ENCODE measurements at regions of chr6 and their contacts with region 1.

Region 1: GRCh38 chr6:129031051-129031599 is 148.2 kb downstream of the LAMA2 start:
- DNase-seq: peak; percentile 60
- ATAC-seq: peak; percentile 65
- H3K4me3 ChIP-seq: no peak overlapping the region
- H3K27ac ChIP-seq: no peak overlapping the region
- H3K4me1 ChIP-seq: no peaks in the 10 kb centered on the region
- H3K27me3 ChIP-seq: no peaks in the 10 kb centered on the region
- CTCF ChIP-seq: no peak
- POLR2A ChIP-seq: no peak
- RAD21 ChIP-seq: no peak

Region 2: DNA sequence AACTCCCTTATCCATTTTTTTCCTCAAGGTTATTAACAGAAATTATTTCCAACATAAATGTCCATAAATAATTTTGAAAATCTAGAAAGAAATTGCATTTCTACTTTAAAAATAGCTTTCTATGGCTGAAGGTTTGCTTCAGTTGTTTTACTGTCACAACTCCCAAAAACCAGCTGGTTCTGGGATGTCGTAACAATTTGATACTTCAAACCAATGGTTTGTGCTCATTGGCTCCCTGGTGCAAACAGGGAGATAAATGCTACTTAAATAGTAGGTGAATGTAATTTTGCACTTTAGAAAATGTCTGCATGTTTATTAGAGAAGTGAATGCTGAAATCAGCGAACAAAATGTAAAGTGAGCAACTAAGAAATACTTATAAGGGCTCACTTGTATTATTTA is 117.1 kb before region 1 on chr6:
- CTCF ChIA-PET with region 1: no interaction called
- POLR2A ChIA-PET with region 1: no interaction called
- dilution Hi-C with region 1: no loop called
- in situ Hi-C with region 1: no loop called
- intact Hi-C with region 1: no loop called
- DNase-seq: no peak
- ATAC-seq: no peak
- H3K4me3 ChIP-seq: no peak overlapping the region
- H3K27ac ChIP-seq: no peak overlapping the region
- H3K4me1 ChIP-seq: no peaks in the 10 kb centered on the region
- H3K27me3 ChIP-seq: no peaks in the 10 kb centered on the region
- CTCF ChIP-seq: no peak
- POLR2A ChIP-seq: no peak
- RAD21 ChIP-seq: no peak

Region 3: DNA sequence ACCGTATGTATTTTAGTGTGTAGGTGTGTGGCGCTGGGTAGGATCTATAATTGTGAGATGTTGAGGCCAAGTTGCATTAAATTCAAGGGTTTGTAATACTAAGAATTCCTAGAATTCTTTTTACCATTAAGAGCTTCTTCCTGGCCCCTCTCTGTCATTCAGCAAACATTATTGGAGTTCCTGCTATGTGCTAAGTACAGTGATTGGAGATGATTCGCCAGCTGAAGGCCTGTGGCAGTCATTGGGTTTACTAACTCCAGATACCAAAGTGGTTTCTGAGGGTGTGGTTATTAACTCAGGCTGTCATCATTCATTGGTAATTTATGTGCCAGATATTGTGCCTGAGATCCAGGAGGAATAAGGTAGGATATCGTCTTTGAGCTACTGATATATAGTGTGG is 19.0 kb after region 1 on chr6:
- CTCF ChIA-PET with region 1: no interaction called
- POLR2A ChIA-PET with region 1: interaction called, 3 read pairs
- dilution Hi-C with region 1: no loop called
- in situ Hi-C with region 1: no loop called
- intact Hi-C with region 1: loop called (anchors 2 kb)
- DNase-seq: peak; percentile 32
- ATAC-seq: peak; percentile 21; the same call in 1 of the 2 replicates
- H3K4me3 ChIP-seq: no peak overlapping the region
- H3K27ac ChIP-seq: no peak overlapping the region
- H3K4me1 ChIP-seq: no peaks in the 10 kb centered on the region
- H3K27me3 ChIP-seq: no peaks in the 10 kb centered on the region
- CTCF ChIP-seq: no peak
- POLR2A ChIP-seq: no peak
- RAD21 ChIP-seq: no peak